A549 (cell line): ENCODE measurements at regions of chr16 and their contacts with region 1.

Region 1: GRCh38 chr16:70289229-70290098 is at the start of gene AARS1:
- DNase-seq: peak; percentile 99 to 100
- ATAC-seq: peak; percentile 99 to 100
- H3K4me3 ChIP-seq: peak within 1 kb of the TSS; percentile 100
- H3K27ac ChIP-seq: peak within 1 kb of the TSS; percentile 95 to 100
- H3K4me1 ChIP-seq: peaks cover 28% of the 10 kb centered on the region
- CTCF ChIP-seq: no peak
- EP300 ChIP-seq: no peak; a peak in 1 of 5 replicates
- POLR2A ChIP-seq: peak; percentile 90
- RAD21 ChIP-seq: no peak
- polyA plus RNA-seq, gene AARS1: 325 and 344 TPM in 2 replicates

Region 2: DNA sequence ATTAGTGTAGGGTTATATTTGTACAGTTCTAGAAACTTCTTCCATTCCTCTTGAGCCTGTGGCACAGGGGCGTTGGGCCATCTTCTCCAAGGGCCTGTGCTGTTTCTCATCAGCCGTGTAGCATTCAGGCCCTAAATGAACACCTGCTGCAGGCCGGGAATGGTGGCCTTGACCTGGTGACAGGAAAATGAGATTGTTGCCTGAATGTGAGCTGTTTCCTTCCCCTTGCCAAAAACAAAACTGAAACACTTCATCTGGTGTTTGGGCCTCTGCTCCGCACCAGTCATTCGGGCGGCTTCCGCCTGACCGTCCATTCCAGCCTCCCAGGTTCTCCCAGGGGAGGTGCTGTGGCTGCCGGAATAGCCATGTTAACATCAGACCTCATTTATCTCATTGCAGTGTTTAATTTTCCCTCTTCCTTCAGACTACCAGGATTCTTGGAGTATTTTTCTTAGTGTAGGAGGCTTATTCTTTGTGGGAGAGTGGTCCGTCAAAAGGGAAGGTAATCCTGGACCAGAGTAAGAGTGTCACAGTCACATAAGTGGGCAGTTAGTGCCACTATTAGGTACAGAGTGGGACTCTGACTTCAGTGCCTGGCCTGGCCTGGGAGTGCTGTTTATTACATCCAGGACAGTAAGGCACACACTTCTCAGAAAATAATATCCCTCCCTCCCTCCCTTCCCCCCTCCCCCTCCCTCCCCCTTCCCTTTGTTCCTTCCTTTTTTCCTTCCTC is 465.5 kb before region 1 on chr16:
- CTCF ChIA-PET with region 1: no interaction called
- POLR2A ChIA-PET with region 1: no interaction called
- DNase-seq: no peak
- ATAC-seq: peak in 1 of 2 experiments; percentile 36; a peak in 1 of 6 replicates
- H3K4me3 ChIP-seq: no peak overlapping the region
- H3K27ac ChIP-seq: peak overlapping the region in 1 of 2 experiments; percentile 11; a peak in 1 of 6 replicates
- H3K4me1 ChIP-seq: peaks cover 17% of the 10 kb centered on the region; the same call in 2 of the 3 replicates
- CTCF ChIP-seq: no peak
- EP300 ChIP-seq: no peak
- POLR2A ChIP-seq: no peak
- RAD21 ChIP-seq: no peak

Region 3: DNA sequence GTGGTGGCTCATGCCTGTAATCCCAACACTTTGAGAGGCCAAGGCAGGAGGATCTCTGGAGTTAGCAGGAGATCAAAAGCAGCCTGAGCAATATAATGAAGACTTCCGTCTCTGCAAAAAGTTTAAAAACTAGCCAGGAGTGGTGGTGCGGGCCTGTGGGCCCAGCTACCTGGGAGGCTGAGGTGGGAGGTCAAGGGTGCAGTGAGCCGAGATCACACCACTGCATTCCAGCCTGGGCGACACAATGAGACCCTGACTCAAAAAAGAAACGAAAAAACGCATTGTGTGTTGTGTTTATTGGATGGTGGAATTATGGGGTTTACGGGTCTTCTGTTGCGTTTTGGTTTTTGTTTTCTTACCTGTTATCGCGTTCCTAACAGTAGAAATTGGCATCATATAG is 56.4 kb after region 1 on chr16:
- CTCF ChIA-PET with region 1: no interaction called
- POLR2A ChIA-PET with region 1: interaction called, 11 read pairs
- DNase-seq: no peak
- ATAC-seq: no peak
- H3K4me3 ChIP-seq: peak overlapping the region; percentile 81
- H3K27ac ChIP-seq: peak overlapping the region; percentile 90 to 91
- H3K4me1 ChIP-seq: peaks cover 11% of the 10 kb centered on the region; the same call in 2 of the 3 replicates
- CTCF ChIP-seq: no peak
- EP300 ChIP-seq: no peak
- POLR2A ChIP-seq: no peak
- RAD21 ChIP-seq: no peak